ENCODE measurements at regions of chr2 and their contacts with region 1.

Region 1: GRCh38 chr2:191030521-191031154 is 16.7 kb upstream of the STAT1 start:
- DNase-seq: peak in 1 of 2 donors; percentile 81
- ATAC-seq: peak; percentile 76 to 84 (median 77)
- H3K4me3 ChIP-seq: no peak overlapping the region
- H3K4me3 Mint-ChIP-seq: no peak overlapping the region
- H3K27ac ChIP-seq: peak overlapping the region; percentile 19
- H3K27ac Mint-ChIP-seq: peak overlapping the region; percentile 87 to 90
- H3K4me1 ChIP-seq: peaks cover 12% of the 10 kb centered on the region
- H3K4me1 Mint-ChIP-seq: peaks cover 47 to 51% of the 10 kb centered on the region in 2 donors
- H3K27me3 ChIP-seq: no peaks in the 10 kb centered on the region
- H3K27me3 Mint-ChIP-seq: no peaks in the 10 kb centered on the region
- CTCF ChIP-seq: peak; percentile 68

Region 2: GRCh38 chr2:190781604-190782198 is 248.9 kb before region 1 on chr2:
- intact Hi-C with region 1: loop called (anchors 1 kb)
- DNase-seq: peak in 1 of 2 donors; percentile 78
- ATAC-seq: peak in 2 of 3 donors; percentile 59 to 68
- H3K4me3 ChIP-seq: no peak overlapping the region
- H3K4me3 Mint-ChIP-seq: no peak overlapping the region
- H3K27ac ChIP-seq: no peak overlapping the region
- H3K27ac Mint-ChIP-seq: no peak overlapping the region
- H3K4me1 ChIP-seq: no peaks in the 10 kb centered on the region
- H3K4me1 Mint-ChIP-seq: no peaks in the 10 kb centered on the region
- H3K27me3 ChIP-seq: no peaks in the 10 kb centered on the region
- H3K27me3 Mint-ChIP-seq: peaks cover 20 to 22% of the 10 kb centered on the region in 2 donors
- CTCF ChIP-seq: peak; percentile 56

Region 3: GRCh38 chr2:190947711-190948251 is 82.9 kb before region 1 on chr2:
- intact Hi-C with region 1: no loop called
- DNase-seq: peak in 1 of 2 donors; percentile 67
- ATAC-seq: peak; percentile 77 to 88 (median 81)
- H3K4me3 ChIP-seq: no peak overlapping the region
- H3K4me3 Mint-ChIP-seq: peak overlapping the region; percentile 32
- H3K27ac ChIP-seq: peak overlapping the region; percentile 54
- H3K27ac Mint-ChIP-seq: no peak overlapping the region
- H3K4me1 ChIP-seq: peaks cover 3% of the 10 kb centered on the region
- H3K4me1 Mint-ChIP-seq: no peaks in the 10 kb centered on the region
- H3K27me3 ChIP-seq: no peaks in the 10 kb centered on the region
- H3K27me3 Mint-ChIP-seq: no peaks in the 10 kb centered on the region
- CTCF ChIP-seq: peak; percentile 10

Region 4: DNA sequence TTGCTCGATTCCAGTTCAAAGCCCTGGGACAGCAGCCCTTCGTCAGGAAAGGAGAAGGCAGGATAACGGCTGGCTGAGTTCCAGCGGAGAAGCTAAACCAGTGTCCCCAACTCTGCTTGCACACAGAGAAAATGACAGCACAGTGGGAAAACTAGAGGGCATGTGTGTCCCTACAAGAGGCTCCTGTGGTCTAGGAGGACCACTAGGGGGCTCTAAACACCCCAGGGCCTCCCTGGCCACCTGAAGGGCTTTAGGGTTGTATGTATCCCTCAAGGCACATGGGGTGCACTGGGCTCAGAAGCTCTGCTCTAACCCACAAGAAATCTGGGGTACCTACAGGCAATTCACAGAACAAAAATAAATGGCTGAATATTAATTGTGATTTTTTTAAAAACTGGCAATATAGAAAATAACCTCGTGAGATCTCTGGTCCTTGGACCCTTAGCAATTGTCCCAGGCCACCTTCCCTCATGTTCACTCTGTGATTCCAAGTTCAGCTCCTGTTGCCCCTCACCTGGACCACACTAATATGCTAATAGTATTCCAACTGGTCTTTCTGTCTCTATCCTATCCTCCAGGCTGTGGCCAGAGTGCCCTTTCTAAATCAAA is 34.2 kb before region 1 on chr2:
- intact Hi-C with region 1: loop called (anchors 1 kb)
- DNase-seq: peak in 1 of 2 donors; percentile 70
- ATAC-seq: peak; percentile 57 to 85 (median 79)
- H3K4me3 ChIP-seq: no peak overlapping the region
- H3K4me3 Mint-ChIP-seq: no peak overlapping the region
- H3K27ac ChIP-seq: no peak overlapping the region
- H3K27ac Mint-ChIP-seq: peak overlapping the region; percentile 60 to 72
- H3K4me1 ChIP-seq: no peaks in the 10 kb centered on the region
- H3K4me1 Mint-ChIP-seq: peaks cover 8 to 28% of the 10 kb centered on the region in 2 donors
- H3K27me3 ChIP-seq: no peaks in the 10 kb centered on the region
- H3K27me3 Mint-ChIP-seq: no peaks in the 10 kb centered on the region
- CTCF ChIP-seq: peak; percentile 64

Region 5: GRCh38 chr2:191013932-191014652 is 16.5 kb before region 1 on chr2 and contains the start of gene STAT1:
- intact Hi-C with region 1: loop called (anchors 2 kb)
- DNase-seq: peak; percentile 97 to 99
- ATAC-seq: peak; percentile 86 to 97 (median 91)
- H3K4me3 ChIP-seq: peak within 1 kb of the TSS; percentile 73
- H3K4me3 Mint-ChIP-seq: no peak within 1 kb of the TSS
- H3K27ac ChIP-seq: peak within 1 kb of the TSS; percentile 97
- H3K27ac Mint-ChIP-seq: no peak within 1 kb of the TSS
- H3K4me1 ChIP-seq: peaks cover 39% of the 10 kb centered on the region
- H3K4me1 Mint-ChIP-seq: peaks cover 5 to 11% of the 10 kb centered on the region in 2 donors
- H3K27me3 ChIP-seq: no peaks in the 10 kb centered on the region
- H3K27me3 Mint-ChIP-seq: no peaks in the 10 kb centered on the region
- CTCF ChIP-seq: no peak
- total RNA-seq, gene STAT1: 49.1 to 91.6 (median 86.2) TPM

Measured in natural killer cell (primary cell).